Activated T-helper 1 cell treated with anti-CD3 and anti-CD28 coated beads, Interleukin-12 subunit alpha, Interleukin-12 subunit beta, Interleukin-2, Interleukin-4 antibody, amounts not matched to agents 30 ng/mL and 10 ng/mL and 1 ng/mL, durations not matched to agents 14 hours and 24 hours and 36 hours (primary cell): ENCODE measurements at regions of chr19 and their contacts with region 1.

Region 1: GRCh38 chr19:19618219-19619051 is at the start of gene PBX4:
- DNase-seq: peak; percentile 99
- H3K4me3 Mint-ChIP-seq: peak within 1 kb of the TSS; percentile 88
- H3K27ac Mint-ChIP-seq: peak within 1 kb of the TSS; percentile 95
- H3K4me1 Mint-ChIP-seq: peaks cover 48% of the 10 kb centered on the region
- H3K27me3 Mint-ChIP-seq: no peaks in the 10 kb centered on the region
- total RNA-seq, gene PBX4: 28.0 and 29.6 TPM in 2 replicates

Region 2: GRCh38 chr19:19540715-19541440 is 77.6 kb before region 1 on chr19:
- intact Hi-C with region 1: loop called (anchors 2 kb)
- DNase-seq: peak; percentile 67
- H3K4me3 Mint-ChIP-seq: peak overlapping the region; percentile 72
- H3K27ac Mint-ChIP-seq: no peak overlapping the region
- H3K4me1 Mint-ChIP-seq: peaks cover 27% of the 10 kb centered on the region
- H3K27me3 Mint-ChIP-seq: peaks cover 18% of the 10 kb centered on the region

Region 3: DNA sequence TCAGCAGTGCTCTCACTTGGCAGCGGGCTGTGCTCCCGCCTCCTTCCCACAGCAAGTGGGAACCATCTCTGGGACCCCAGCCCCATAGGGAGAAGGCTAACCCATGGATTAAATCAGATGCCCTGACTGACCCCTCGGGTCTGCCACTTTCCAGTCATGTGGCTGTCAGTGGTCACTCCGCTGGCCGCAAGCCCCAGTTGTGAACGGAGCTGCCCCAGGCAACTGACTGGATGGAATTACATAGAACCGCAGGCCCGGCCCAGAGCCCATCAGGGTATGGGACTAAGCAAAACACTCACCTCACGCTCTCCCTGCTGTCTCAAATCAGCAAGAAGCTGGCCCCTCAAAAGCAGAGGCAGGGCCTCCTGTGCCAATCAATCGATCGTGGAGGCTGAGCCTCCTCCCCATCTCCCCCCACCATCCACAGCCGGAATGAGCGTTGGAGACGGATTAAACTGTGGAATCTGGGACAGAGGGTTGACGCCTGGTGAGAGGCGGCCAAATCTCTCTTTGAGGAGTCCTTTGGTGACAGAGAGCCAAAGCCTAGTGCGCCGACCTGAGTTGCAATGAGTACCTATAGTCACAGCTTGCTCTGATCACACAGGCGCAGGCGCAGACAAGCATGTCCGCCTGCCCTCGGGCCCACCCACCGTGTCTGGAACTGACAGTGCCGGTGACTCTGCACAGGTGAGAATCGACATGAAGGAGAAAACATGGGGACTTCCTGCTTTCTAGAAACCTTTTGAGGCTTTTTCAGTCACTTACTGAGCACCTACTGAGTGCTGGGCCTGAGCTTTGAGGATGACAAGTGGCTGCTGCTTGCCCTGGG is 38.7 kb before region 1 on chr19:
- intact Hi-C with region 1: loop called (anchors 5 kb)
- DNase-seq: no peak
- H3K4me3 Mint-ChIP-seq: no peak overlapping the region
- H3K27ac Mint-ChIP-seq: peak overlapping the region; percentile 52
- H3K4me1 Mint-ChIP-seq: peaks cover 33% of the 10 kb centered on the region
- H3K27me3 Mint-ChIP-seq: no peaks in the 10 kb centered on the region

Region 4: DNA sequence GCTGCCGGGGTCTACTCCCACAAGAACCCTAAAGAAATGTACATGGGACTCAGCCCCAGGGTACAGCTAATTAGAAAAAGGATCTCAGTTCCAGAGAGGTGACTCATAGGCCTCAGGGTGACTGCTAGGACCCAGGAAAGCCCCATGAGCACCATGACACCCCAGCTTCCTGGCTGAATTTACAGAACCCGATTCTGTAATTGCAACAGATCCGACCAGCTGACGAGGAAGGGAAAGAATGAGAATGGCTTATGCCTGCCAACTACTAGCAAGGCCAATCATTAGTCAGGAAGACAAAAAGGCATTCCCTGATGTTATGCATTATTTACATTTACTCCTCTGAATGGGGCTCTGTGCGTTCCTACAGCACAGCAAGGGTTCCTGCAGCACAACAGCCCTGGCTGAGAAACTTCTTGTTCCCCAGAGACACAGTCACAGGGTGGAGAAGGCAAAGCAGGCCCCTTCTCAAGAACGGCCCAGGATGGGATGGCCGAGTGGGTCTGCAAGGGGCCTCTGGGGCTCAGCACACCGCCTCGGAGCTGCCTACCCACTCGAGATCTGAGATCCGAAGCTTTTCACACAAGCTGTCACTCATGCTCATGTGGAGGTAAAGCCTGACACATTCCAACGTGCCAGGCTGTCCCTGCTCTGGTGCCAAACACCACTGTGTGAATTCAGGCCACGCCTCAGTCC is 27.2 kb before region 1 on chr19:
- intact Hi-C with region 1: loop called (anchors 1 kb)
- DNase-seq: peak; percentile 75
- H3K4me3 Mint-ChIP-seq: peak overlapping the region; percentile 74
- H3K27ac Mint-ChIP-seq: peak overlapping the region; percentile 97
- H3K4me1 Mint-ChIP-seq: peaks cover 77% of the 10 kb centered on the region
- H3K27me3 Mint-ChIP-seq: no peaks in the 10 kb centered on the region

Region 5: GRCh38 chr19:19597809-19598306 is 20.6 kb before region 1 on chr19:
- intact Hi-C with region 1: loop called (anchors 1 kb)
- DNase-seq: peak; percentile 73
- H3K4me3 Mint-ChIP-seq: peak overlapping the region; percentile 79
- H3K27ac Mint-ChIP-seq: peak overlapping the region; percentile 99
- H3K4me1 Mint-ChIP-seq: peaks cover 69% of the 10 kb centered on the region
- H3K27me3 Mint-ChIP-seq: no peaks in the 10 kb centered on the region